PC-3 (cell line): ENCODE measurements at regions of chr2 and their contacts with region 1.

Region 1: DNA sequence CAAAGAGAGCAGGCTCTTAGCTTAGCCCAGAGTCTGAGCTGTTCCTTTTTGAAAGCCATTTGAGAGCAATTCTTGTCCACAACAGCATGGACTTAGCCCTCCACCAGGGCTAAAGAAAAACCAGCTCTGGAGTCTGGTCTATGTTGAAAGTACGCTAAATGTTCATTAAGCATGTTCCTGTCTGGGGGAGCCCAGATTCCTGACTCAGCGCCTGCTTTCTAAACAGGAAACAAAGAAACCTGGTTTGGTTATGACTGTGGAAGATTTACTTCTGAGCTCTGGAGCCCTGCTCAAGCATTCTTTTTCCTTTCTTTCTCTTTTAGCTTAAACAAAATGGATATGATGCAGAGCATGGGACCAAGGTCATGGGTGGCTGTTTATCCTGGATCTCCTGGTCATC is 279.8 kb downstream of the RBM43 start:
- DNase-seq: no peak
- ATAC-seq: no peak
- H3K4me3 ChIP-seq: no peak overlapping the region
- H3K27ac ChIP-seq: no peak overlapping the region
- H3K4me1 ChIP-seq: no peaks in the 10 kb centered on the region
- H3K27me3 ChIP-seq: no peaks in the 10 kb centered on the region
- CTCF ChIP-seq: no peak

Region 2: GRCh38 chr2:150911766-150912280 is 70.0 kb before region 1 on chr2:
- CTCF ChIA-PET with region 1: no interaction called
- POLR2A ChIA-PET with region 1: interaction called, 14 read pairs
- intact Hi-C with region 1: no loop called
- DNase-seq: peak; percentile 14
- ATAC-seq: no peak
- H3K4me3 ChIP-seq: no peak overlapping the region
- H3K27ac ChIP-seq: no peak overlapping the region
- H3K4me1 ChIP-seq: peaks cover 6% of the 10 kb centered on the region
- H3K27me3 ChIP-seq: no peaks in the 10 kb centered on the region
- CTCF ChIP-seq: no peak